ENCODE measurements at regions of chr5 and their contacts with region 1.

Region 1: GRCh38 chr5:138352071-138352721 is at the start of gene KDM3B:
- DNase-seq: peak; percentile 83 to 100
- H3K4me3 ChIP-seq: peak within 1 kb of the TSS; percentile 58 to 97 (median 95)
- H3K27ac ChIP-seq: peak within 1 kb of the TSS; percentile 82
- H3K4me1 ChIP-seq: peaks cover 0 to 9% (median 3%) of the 10 kb centered on the region in 4 experiments; a peak in 3 of 7 replicates
- H3K27me3 ChIP-seq: no peaks in the 10 kb centered on the region
- CTCF ChIP-seq: peak; percentile 99 to 100 (median 99)
- EP300 ChIP-seq: peak; percentile 17 to 29; a peak in 1 of 3 replicates
- POLR2A ChIP-seq: peak in 1 of 2 experiments; percentile 23; a peak in 1 of 3 replicates
- RAD21 ChIP-seq: peak; percentile 25 to 47; a peak in 3 of 4 replicates
- total RNA-seq, gene KDM3B: 78.1 and 79.7 TPM in 2 replicates

Region 2: DNA sequence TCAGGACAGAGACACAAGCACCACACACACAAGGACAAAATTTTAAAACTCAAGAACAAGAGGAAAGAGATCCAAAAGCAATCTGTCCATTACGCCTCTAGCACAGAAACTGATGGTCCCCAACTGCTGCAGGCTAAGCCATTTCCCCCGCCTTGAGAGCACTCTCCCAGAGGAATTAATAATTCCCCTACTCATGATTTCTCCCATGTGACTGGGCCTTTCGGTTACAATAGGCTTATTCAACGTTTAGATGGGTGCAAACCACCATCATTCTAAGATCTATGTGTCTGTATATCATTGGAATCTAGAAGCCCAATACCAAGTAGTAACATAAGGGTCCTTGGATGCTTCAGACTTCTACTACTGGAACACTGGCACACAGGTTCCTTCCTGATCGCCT is 192.5 kb before region 1 on chr5:
- CTCF ChIA-PET with region 1: no interaction called
- POLR2A ChIA-PET with region 1: no interaction called
- DNase-seq: no peak
- H3K4me3 ChIP-seq: no peak overlapping the region
- H3K27ac ChIP-seq: no peak overlapping the region
- H3K4me1 ChIP-seq: no peaks in the 10 kb centered on the region
- H3K27me3 ChIP-seq: no peaks in the 10 kb centered on the region
- CTCF ChIP-seq: no peak
- EP300 ChIP-seq: no peak
- POLR2A ChIP-seq: no peak
- RAD21 ChIP-seq: no peak

Region 3: GRCh38 chr5:138178516-138179276 is 173.5 kb before region 1 on chr5 and contains the starts of genes BRD8 and KIF20A:
- CTCF ChIA-PET with region 1: interaction called, 4 read pairs
- POLR2A ChIA-PET with region 1: interaction called, 12 read pairs
- DNase-seq: peak; percentile 86 to 90
- H3K4me3 ChIP-seq: peak within 1 kb of the TSS; percentile 91 to 100 (median 96)
- H3K27ac ChIP-seq: peak within 1 kb of the TSS; percentile 91
- H3K4me1 ChIP-seq: no peaks in the 10 kb centered on the region; a peak in 2 of 7 replicates
- H3K27me3 ChIP-seq: no peaks in the 10 kb centered on the region
- CTCF ChIP-seq: no peak
- EP300 ChIP-seq: no peak
- POLR2A ChIP-seq: peak; percentile 82 to 84
- RAD21 ChIP-seq: no peak
- total RNA-seq, gene BRD8: 75.8 and 78.5 TPM in 2 replicates
- total RNA-seq, gene KIF20A: 67.1 and 68.1 TPM in 2 replicates

Region 4: DNA sequence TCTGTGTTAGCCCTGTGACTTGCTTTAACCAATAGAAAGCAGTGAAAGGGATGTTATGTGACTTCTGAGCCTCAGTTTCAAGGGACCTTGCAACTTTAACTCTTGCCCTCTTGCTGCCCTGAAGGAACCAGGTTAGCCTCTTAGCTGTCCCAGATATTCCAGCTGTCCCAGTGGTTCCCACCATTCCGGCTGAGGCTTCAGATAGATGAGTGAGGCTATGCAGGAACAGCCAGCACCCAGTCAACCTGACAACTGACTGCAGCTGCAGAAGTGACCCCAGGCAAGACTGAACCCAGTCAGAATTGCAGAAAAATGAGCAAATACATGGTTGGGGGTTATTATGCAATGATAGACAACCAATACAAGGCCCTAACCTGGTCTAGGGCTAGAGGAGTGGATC is 128.7 kb before region 1 on chr5:
- CTCF ChIA-PET with region 1: interaction called, 10 read pairs
- POLR2A ChIA-PET with region 1: no interaction called
- DNase-seq: no peak
- H3K4me3 ChIP-seq: no peak overlapping the region
- H3K27ac ChIP-seq: no peak overlapping the region
- H3K4me1 ChIP-seq: no peaks in the 10 kb centered on the region
- H3K27me3 ChIP-seq: no peaks in the 10 kb centered on the region; a peak in 1 of 7 replicates
- CTCF ChIP-seq: no peak
- EP300 ChIP-seq: no peak
- POLR2A ChIP-seq: no peak
- RAD21 ChIP-seq: no peak

Region 5: GRCh38 chr5:138337685-138338410 is 14.3 kb before region 1 on chr5 and contains the start of gene FAM53C:
- CTCF ChIA-PET with region 1: interaction called, 196 read pairs
- POLR2A ChIA-PET with region 1: interaction called, 254 read pairs
- DNase-seq: peak; percentile 71 to 98
- H3K4me3 ChIP-seq: peak within 1 kb of the TSS; percentile 68 to 95 (median 91)
- H3K27ac ChIP-seq: peak within 1 kb of the TSS; percentile 100
- H3K4me1 ChIP-seq: peaks cover 0 to 5% (median 2%) of the 10 kb centered on the region in 4 experiments; a peak in 3 of 7 replicates
- H3K27me3 ChIP-seq: no peaks in the 10 kb centered on the region
- CTCF ChIP-seq: no peak
- EP300 ChIP-seq: peak in 1 of 2 experiments; percentile 98; a peak in 2 of 3 replicates
- POLR2A ChIP-seq: peak; percentile 99 to 100
- RAD21 ChIP-seq: no peak
- total RNA-seq, gene FAM53C: 57.6 and 58.9 TPM in 2 replicates

Region 6: GRCh38 chr5:138503487-138504270 is 151.5 kb after region 1 on chr5:
- CTCF ChIA-PET with region 1: no interaction called
- POLR2A ChIA-PET with region 1: no interaction called
- DNase-seq: no peak
- H3K4me3 ChIP-seq: no peak overlapping the region
- H3K27ac ChIP-seq: no peak overlapping the region
- H3K4me1 ChIP-seq: no peaks in the 10 kb centered on the region
- H3K27me3 ChIP-seq: no peaks in the 10 kb centered on the region
- CTCF ChIP-seq: peak; percentile 55 to 90 (median 85)
- EP300 ChIP-seq: no peak
- POLR2A ChIP-seq: 0 out of 3 replicates have a peak, but pooled peaks of 1 of the 2 experiments have one; percentile 33
- RAD21 ChIP-seq: peak; percentile 85 to 88

Region 7: DNA sequence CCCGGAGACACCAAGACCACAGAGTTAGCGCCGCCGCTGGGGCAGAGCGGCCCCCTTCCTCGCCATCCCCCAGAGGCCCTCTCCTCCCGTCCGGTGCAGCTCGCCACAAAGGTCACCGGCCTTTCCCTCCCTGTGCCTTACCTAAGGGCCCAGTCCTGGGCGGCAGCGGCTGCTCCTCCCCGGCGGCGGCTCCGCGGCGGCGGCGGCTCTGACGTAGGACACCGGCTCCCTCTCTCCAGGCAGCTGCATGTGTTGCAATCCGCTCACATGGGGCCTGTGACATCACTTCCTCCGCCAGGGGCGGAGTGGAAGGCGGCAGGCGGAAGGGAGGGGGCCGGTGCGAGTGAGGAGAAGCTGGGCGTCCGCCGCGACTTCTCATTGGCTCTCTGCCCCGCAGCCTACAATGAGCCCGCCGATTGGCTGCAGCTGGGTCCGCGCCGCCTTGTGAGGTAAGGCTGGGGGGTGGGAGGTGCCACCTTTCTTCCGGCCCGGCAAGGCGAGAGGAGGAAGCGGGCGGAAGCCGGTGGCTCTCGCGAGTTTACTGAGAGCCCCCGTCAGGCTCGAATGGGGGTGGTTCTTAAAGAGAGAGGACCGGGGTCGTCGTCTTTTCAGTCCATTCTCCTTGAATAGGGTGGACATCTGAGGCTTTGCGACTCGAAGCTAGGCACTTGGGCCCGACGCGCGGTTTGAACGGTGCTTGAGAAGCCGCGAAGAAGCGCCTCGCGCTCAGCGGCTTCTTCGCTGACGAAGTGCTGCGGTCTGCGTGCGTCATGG is 190.9 kb after region 1 on chr5 and contains the start of gene ETF1:
- CTCF ChIA-PET with region 1: interaction called, 4 read pairs
- POLR2A ChIA-PET with region 1: interaction called, 10 read pairs
- DNase-seq: peak; percentile 98
- H3K4me3 ChIP-seq: peak within 1 kb of the TSS; percentile 89 to 100 (median 95)
- H3K27ac ChIP-seq: peak within 1 kb of the TSS; percentile 100
- H3K4me1 ChIP-seq: peaks cover 0 to 16% (median 2%) of the 10 kb centered on the region in 4 experiments; a peak in 4 of 7 replicates
- H3K27me3 ChIP-seq: no peaks in the 10 kb centered on the region
- CTCF ChIP-seq: no peak
- EP300 ChIP-seq: peak in 1 of 2 experiments; percentile 72; a peak in 2 of 3 replicates
- POLR2A ChIP-seq: peak; percentile 77 to 82
- RAD21 ChIP-seq: no peak
- total RNA-seq, gene ETF1: 168 TPM in 2 replicates